ENCODE measurements at regions of chr1 and their contacts with region 1.

Region 1: GRCh38 chr1:160607011-160607671 is 27.8 kb upstream of the CD84 start:
- DNase-seq: peak; percentile 83
- ATAC-seq: peak; percentile 98
- H3K4me3 Mint-ChIP-seq: no peak overlapping the region
- H3K27ac Mint-ChIP-seq: peak overlapping the region; percentile 85
- H3K4me1 Mint-ChIP-seq: peaks cover 57% of the 10 kb centered on the region
- H3K27me3 Mint-ChIP-seq: no peaks in the 10 kb centered on the region

Region 2: GRCh38 chr1:160428655-160429054 is 178.5 kb before region 1 on chr1:
- CTCF ChIA-PET with region 1: interaction called, 62 read pairs
- DNase-seq: peak; percentile 51
- ATAC-seq: peak; percentile 56
- H3K4me3 Mint-ChIP-seq: peak overlapping the region; percentile 51
- H3K27ac Mint-ChIP-seq: peak overlapping the region; percentile 83
- H3K4me1 Mint-ChIP-seq: peaks cover 55% of the 10 kb centered on the region
- H3K27me3 Mint-ChIP-seq: no peaks in the 10 kb centered on the region

Region 3: DNA sequence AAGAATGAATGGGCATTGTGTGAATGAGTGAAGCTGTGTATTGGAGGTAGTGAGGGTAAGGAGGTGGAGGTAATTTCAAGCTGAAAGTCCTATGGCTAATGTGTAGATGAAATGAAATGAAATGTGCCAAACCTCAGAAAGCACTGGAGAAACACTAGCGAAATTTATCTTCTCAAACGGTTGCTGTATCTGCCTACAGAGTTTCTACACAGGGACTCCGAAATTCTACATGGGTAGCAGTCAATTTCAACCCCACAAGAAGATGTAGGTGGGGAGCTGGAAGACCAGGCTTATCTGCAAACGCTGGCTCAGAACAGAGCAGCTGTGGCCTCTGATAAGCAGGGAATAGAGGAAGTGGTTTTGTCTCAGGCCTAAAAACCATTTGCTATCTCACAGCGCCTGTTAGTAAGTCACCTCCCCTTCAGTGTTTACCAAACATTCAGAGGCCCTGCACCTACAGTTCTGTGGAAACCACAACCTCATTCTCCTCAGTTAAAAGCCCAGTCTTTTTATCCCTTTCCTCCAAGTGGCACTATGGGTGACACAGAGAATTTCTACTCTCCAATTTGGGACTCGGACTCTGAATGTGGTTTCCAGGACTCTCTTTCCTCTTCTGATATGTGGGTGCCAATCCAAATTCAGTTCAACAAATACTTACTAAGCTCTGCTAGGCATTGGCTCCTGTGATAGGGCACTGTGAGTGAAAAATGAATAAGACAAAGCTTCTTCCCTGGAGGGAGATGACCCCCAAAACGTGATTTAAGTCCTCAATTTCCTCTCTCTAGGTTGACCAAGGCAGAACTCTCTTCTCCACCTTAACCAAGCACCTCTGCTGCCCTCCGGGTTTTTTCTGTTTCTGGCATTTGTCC is 66.9 kb before region 1 on chr1:
- CTCF ChIA-PET with region 1: interaction called, 337 read pairs
- DNase-seq: peak; percentile 81
- ATAC-seq: peak; percentile 93
- H3K4me3 Mint-ChIP-seq: peak overlapping the region; percentile 32
- H3K27ac Mint-ChIP-seq: peak overlapping the region; percentile 85
- H3K4me1 Mint-ChIP-seq: peaks cover 48% of the 10 kb centered on the region
- H3K27me3 Mint-ChIP-seq: no peaks in the 10 kb centered on the region

Region 4: DNA sequence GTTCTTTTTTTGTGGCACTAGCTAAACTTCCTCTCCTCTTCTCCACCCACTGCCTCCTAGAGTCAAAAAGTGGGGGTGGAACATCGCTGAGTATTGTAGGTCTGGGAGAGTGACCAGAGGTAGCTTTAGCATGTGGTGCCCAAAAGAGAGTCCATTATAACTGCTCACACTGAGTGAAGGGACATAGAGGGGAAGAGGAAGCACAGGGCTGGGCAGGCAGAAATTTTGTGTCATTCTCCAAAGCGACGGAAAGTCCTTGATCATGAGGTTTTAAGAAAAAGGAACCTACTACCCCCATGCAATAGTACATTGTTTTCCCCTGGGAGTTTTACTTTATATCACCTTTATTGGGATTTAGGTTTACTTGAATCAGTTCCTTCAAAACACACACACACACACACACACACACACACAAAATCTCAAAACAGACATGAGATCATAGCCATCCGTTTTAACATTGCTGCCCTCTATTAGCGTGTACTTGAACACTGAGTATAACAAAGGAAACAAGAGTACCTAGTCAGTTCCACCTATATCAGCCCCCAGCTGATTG is 32.0 kb before region 1 on chr1:
- CTCF ChIA-PET with region 1: interaction called, 16 read pairs
- DNase-seq: no peak
- ATAC-seq: peak; percentile 14
- H3K4me3 Mint-ChIP-seq: peak overlapping the region; percentile 57
- H3K27ac Mint-ChIP-seq: peak overlapping the region; percentile 97
- H3K4me1 Mint-ChIP-seq: peaks cover 74% of the 10 kb centered on the region
- H3K27me3 Mint-ChIP-seq: no peaks in the 10 kb centered on the region

Region 5: GRCh38 chr1:160584784-160585183 is 22.4 kb before region 1 on chr1:
- CTCF ChIA-PET with region 1: interaction called, 12 read pairs
- DNase-seq: no peak
- ATAC-seq: no peak
- H3K4me3 Mint-ChIP-seq: no peak overlapping the region
- H3K27ac Mint-ChIP-seq: peak overlapping the region; percentile 1
- H3K4me1 Mint-ChIP-seq: peaks cover 32% of the 10 kb centered on the region
- H3K27me3 Mint-ChIP-seq: no peaks in the 10 kb centered on the region

Region 6: GRCh38 chr1:160618763-160619274 is 11.7 kb after region 1 on chr1:
- CTCF ChIA-PET with region 1: interaction called, 57 read pairs
- DNase-seq: peak; percentile 68
- ATAC-seq: no peak
- H3K4me3 Mint-ChIP-seq: no peak overlapping the region
- H3K27ac Mint-ChIP-seq: peak overlapping the region; percentile 66
- H3K4me1 Mint-ChIP-seq: peaks cover 71% of the 10 kb centered on the region
- H3K27me3 Mint-ChIP-seq: no peaks in the 10 kb centered on the region